AG04450 (cell line): ENCODE measurements at regions of chr22 and their contacts with region 1.

Region 1: GRCh38 chr22:28843633-28844032 is 39.7 kb upstream of the ZNRF3 start:
- DNase-seq: no peak
- H3K4me3 ChIP-seq: no peak overlapping the region
- H3K27ac ChIP-seq: no peak overlapping the region
- H3K27me3 ChIP-seq: no peaks in the 10 kb centered on the region
- CTCF ChIP-seq: no peak

Region 2: GRCh38 chr22:28072066-28072465 is 771.6 kb before region 1 on chr22:
- CTCF ChIA-PET with region 1: no interaction called
- POLR2A ChIA-PET with region 1: interaction called, 10 read pairs
- DNase-seq: no peak
- H3K4me3 ChIP-seq: no peak overlapping the region
- H3K27ac ChIP-seq: no peak overlapping the region
- H3K27me3 ChIP-seq: no peaks in the 10 kb centered on the region
- CTCF ChIP-seq: no peak